Activated CD8-positive, alpha-beta T cell treated with anti-CD3 and anti-CD28 coated beads, Interleukin-2, amount 10 ng/mL, durations not matched to agents 7 days and 5 days (primary cell): ENCODE measurements at regions of chr7 and their contacts with region 1.

Region 1: GRCh38 chr7:143240291-143241168 is 18.7 kb downstream of the TAS2R40 start:
- DNase-seq: peak; percentile 83
- ATAC-seq: peak; percentile 85
- H3K4me3 Mint-ChIP-seq: no peak overlapping the region
- H3K27ac Mint-ChIP-seq: peak overlapping the region; percentile 51
- H3K4me1 Mint-ChIP-seq: peaks cover 37% of the 10 kb centered on the region
- H3K27me3 Mint-ChIP-seq: peaks cover 11% of the 10 kb centered on the region

Region 2: DNA sequence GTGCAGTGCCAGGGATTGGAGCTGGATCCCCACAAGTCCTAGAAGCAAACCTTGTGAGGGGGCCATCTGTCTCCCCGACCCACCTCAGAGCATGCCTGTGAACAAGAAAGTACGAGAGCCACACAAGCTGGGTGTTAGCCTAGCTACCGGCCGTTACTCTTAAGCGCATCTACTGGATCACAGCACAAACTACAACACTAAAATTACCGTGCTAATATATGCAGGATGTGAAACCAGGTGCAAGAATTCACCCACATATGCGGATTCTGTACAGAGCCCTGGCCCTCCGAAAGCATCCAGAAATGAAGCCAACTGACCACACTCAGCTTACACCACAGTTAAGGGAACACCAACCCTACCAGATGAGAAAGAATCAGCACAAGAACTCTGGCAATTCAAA is 507.3 kb before region 1 on chr7:
- CTCF ChIA-PET with region 1: no interaction called
- POLR2A ChIA-PET with region 1: no interaction called
- DNase-seq: no peak
- ATAC-seq: no peak
- H3K4me3 Mint-ChIP-seq: no peak overlapping the region
- H3K27ac Mint-ChIP-seq: no peak overlapping the region
- H3K4me1 Mint-ChIP-seq: no peaks in the 10 kb centered on the region
- H3K27me3 Mint-ChIP-seq: no peaks in the 10 kb centered on the region

Region 3: GRCh38 chr7:143049362-143049761 is 191.2 kb before region 1 on chr7:
- CTCF ChIA-PET with region 1: no interaction called
- POLR2A ChIA-PET with region 1: no interaction called
- DNase-seq: no peak
- ATAC-seq: no peak
- H3K4me3 Mint-ChIP-seq: no peak overlapping the region
- H3K27ac Mint-ChIP-seq: no peak overlapping the region
- H3K4me1 Mint-ChIP-seq: no peaks in the 10 kb centered on the region
- H3K27me3 Mint-ChIP-seq: peaks cover 7% of the 10 kb centered on the region

Region 4: GRCh38 chr7:143214789-143215679 is 25.5 kb before region 1 on chr7:
- CTCF ChIA-PET with region 1: interaction called, 29 read pairs
- POLR2A ChIA-PET with region 1: no interaction called
- DNase-seq: peak; percentile 79
- ATAC-seq: peak; percentile 85
- H3K4me3 Mint-ChIP-seq: no peak overlapping the region
- H3K27ac Mint-ChIP-seq: no peak overlapping the region
- H3K4me1 Mint-ChIP-seq: no peaks in the 10 kb centered on the region
- H3K27me3 Mint-ChIP-seq: peaks cover 6% of the 10 kb centered on the region

Region 5: DNA sequence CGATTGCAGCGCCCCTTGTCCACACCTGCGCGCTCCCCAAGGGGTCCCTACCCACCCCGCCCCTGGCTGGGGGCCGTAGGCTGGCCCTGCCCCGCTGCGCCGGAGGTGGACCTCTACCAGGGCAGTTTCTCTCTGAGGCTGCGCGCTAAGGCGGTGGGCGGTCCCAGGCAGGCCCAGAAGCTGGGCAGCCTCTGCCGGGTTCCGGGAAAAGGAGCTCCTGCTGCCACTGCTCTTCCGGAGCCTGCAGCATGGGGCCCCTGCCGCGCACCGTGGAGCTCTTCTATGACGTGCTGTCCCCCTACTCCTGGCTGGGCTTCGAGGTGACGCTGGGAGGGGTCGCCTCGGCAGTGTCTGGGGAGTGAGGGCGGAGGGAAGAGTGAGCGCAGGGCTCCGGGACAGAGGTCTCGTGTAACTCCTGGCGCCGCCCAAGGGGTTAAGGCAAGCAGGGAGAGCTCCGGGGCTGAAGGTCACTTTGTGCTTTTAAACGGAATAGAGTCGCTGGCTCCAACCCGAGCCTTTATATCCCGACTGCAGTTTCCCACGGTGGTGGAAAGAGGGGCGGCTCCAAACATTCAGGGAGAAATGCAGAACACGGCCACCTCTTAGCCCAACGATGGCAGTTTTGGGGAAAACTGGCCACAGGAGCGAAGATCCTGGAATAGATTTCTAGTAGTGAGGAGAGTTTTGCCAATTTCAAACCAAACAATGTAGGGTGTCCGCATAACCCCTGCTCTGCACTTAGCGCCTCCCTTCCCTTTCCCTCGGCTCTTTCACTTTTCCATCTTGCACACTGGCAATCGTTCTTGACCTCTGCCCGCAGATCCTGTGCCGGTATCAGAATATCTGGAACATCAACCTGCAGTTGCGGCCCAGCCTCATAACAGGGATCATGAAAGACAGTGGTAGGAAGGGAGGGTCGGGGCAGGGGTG is 23.0 kb after region 1 on chr7 and contains the start of gene GSTK1:
- CTCF ChIA-PET with region 1: interaction called, 224 read pairs
- POLR2A ChIA-PET with region 1: interaction called, 20 read pairs
- DNase-seq: peak; percentile 84
- ATAC-seq: peak; percentile 99
- H3K4me3 Mint-ChIP-seq: peak within 1 kb of the TSS; percentile 97
- H3K27ac Mint-ChIP-seq: peak within 1 kb of the TSS; percentile 93
- H3K4me1 Mint-ChIP-seq: peaks cover 53% of the 10 kb centered on the region
- H3K27me3 Mint-ChIP-seq: no peaks in the 10 kb centered on the region
- total RNA-seq, gene GSTK1: 254 to 255 TPM

Region 6: DNA sequence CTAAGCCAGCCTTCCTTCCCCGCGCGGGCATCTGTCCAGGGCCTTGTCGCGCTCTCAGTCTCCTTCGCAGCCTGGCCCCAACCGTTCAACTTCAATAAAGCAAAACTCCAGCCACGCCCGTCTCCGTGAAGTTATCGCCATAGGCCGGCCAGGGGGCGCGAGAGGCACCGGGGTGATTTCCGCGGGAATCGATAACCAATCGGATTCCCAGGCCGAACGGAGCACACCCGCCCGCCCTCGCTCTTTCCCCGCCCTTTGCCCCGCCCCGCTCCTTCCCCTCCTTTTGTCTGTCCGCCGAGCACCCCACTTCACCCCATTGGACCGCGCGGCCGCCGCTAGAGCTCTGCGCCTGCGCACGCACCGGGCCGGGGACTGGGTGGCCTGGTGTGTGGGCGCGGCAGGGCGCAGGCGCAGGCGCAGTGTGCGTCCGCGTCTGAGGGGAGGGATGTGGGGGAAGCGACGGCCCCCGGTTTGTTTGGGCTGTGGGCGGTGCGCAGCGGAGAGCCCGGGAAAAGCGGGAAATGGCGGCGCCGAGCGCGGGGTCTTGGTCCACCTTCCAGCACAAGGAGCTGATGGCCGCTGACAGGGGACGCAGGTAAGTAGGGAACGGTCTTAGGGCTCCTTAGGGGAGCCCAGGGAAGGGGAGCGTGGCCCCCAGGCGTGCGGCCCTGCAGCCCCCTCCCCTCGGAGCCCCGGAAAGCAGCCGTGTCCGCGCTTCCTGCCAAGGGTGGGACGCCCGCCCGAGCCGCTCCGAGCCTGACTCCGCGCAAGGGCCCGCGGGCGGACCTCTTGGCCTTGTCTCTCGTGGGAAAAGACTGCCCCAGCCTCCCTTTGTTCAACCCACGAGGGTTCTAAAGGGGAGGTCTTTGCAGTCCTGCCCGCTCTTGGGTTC is 47.7 kb after region 1 on chr7 and contains the start of gene CASP2:
- CTCF ChIA-PET with region 1: interaction called, 274 read pairs
- POLR2A ChIA-PET with region 1: interaction called, 9 read pairs
- DNase-seq: peak; percentile 99
- ATAC-seq: peak; percentile 97
- H3K4me3 Mint-ChIP-seq: peak within 1 kb of the TSS; percentile 93
- H3K27ac Mint-ChIP-seq: peak within 1 kb of the TSS; percentile 94
- H3K4me1 Mint-ChIP-seq: peaks cover 55% of the 10 kb centered on the region
- H3K27me3 Mint-ChIP-seq: no peaks in the 10 kb centered on the region
- total RNA-seq, gene CASP2: 111 to 115 TPM

Region 7: GRCh38 chr7:143325240-143325639 is 84.7 kb after region 1 on chr7:
- CTCF ChIA-PET with region 1: interaction called, 10 read pairs
- POLR2A ChIA-PET with region 1: no interaction called
- DNase-seq: no peak
- ATAC-seq: no peak
- H3K4me3 Mint-ChIP-seq: no peak overlapping the region
- H3K27ac Mint-ChIP-seq: peak overlapping the region; percentile 36
- H3K4me1 Mint-ChIP-seq: peaks cover 10% of the 10 kb centered on the region
- H3K27me3 Mint-ChIP-seq: no peaks in the 10 kb centered on the region

Region 8: GRCh38 chr7:143380255-143380645 is 139.7 kb after region 1 on chr7:
- CTCF ChIA-PET with region 1: interaction called, 26 read pairs
- POLR2A ChIA-PET with region 1: interaction called, 4 read pairs
- DNase-seq: peak; percentile 91
- ATAC-seq: peak; percentile 53
- H3K4me3 Mint-ChIP-seq: peak overlapping the region; percentile 80
- H3K27ac Mint-ChIP-seq: peak overlapping the region; percentile 91
- H3K4me1 Mint-ChIP-seq: peaks cover 38% of the 10 kb centered on the region
- H3K27me3 Mint-ChIP-seq: no peaks in the 10 kb centered on the region

Region 9: GRCh38 chr7:143416565-143417149 is 176.1 kb after region 1 on chr7:
- CTCF ChIA-PET with region 1: interaction called, 88 read pairs
- POLR2A ChIA-PET with region 1: no interaction called
- DNase-seq: no peak
- ATAC-seq: peak; percentile 57
- H3K4me3 Mint-ChIP-seq: no peak overlapping the region
- H3K27ac Mint-ChIP-seq: no peak overlapping the region
- H3K4me1 Mint-ChIP-seq: no peaks in the 10 kb centered on the region
- H3K27me3 Mint-ChIP-seq: no peaks in the 10 kb centered on the region